ENCODE measurements at regions of chr5 and their contacts with region 1.

Region 1: GRCh38 chr5:95822542-95823181 is at the start of gene GLRX:
- DNase-seq: peak; percentile 91
- ATAC-seq: peak; percentile 70
- H3K4me3 ChIP-seq: peak within 1 kb of the TSS; percentile 73
- H3K27ac ChIP-seq: peak within 1 kb of the TSS; percentile 96
- H3K4me1 ChIP-seq: peaks cover 34% of the 10 kb centered on the region
- H3K27me3 ChIP-seq: no peaks in the 10 kb centered on the region
- CTCF ChIP-seq: no peak
- total RNA-seq, gene GLRX: 24.6 and 27.4 TPM in 2 replicates

Region 2: DNA sequence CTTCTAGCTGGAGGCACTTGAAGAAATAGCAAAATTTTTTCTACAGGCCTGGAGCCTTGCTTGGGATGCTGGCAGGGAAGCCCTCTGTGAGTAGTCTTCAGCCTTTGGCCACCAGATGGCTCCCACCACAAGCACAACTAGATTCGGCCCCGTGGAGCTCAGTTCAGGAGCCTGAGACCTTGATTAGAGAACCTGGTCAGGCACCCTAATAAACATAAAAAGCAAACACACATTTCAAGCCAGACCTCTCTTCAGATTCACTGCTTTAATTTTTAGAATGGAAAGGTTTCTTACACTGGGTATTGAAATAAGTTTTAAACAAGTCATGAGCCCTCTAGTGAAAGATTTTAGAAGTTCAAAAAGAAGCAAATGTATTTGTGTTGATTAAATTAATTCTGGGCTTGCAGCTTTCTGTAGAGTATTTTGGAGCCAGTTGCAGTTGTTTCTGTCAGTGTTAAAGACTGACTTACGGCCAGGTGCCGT is 41.5 kb before region 1 on chr5:
- CTCF ChIA-PET with region 1: interaction called, 15 read pairs
- POLR2A ChIA-PET with region 1: no interaction called
- intact Hi-C with region 1: no loop called
- DNase-seq: peak; percentile 73
- ATAC-seq: peak; percentile 100
- H3K4me3 ChIP-seq: no peak overlapping the region
- H3K27ac ChIP-seq: no peak overlapping the region
- H3K4me1 ChIP-seq: no peaks in the 10 kb centered on the region
- H3K27me3 ChIP-seq: no peaks in the 10 kb centered on the region
- CTCF ChIP-seq: peak; percentile 95

Region 3: GRCh38 chr5:95835682-95836385 is 13.2 kb after region 1 on chr5:
- CTCF ChIA-PET with region 1: no interaction called
- POLR2A ChIA-PET with region 1: interaction called, 20 read pairs
- intact Hi-C with region 1: loop called (anchors 1 kb)
- DNase-seq: no peak
- ATAC-seq: no peak
- H3K4me3 ChIP-seq: peak overlapping the region; percentile 71
- H3K27ac ChIP-seq: no peak overlapping the region
- H3K4me1 ChIP-seq: peaks cover 14% of the 10 kb centered on the region
- H3K27me3 ChIP-seq: no peaks in the 10 kb centered on the region
- CTCF ChIP-seq: no peak

Region 4: DNA sequence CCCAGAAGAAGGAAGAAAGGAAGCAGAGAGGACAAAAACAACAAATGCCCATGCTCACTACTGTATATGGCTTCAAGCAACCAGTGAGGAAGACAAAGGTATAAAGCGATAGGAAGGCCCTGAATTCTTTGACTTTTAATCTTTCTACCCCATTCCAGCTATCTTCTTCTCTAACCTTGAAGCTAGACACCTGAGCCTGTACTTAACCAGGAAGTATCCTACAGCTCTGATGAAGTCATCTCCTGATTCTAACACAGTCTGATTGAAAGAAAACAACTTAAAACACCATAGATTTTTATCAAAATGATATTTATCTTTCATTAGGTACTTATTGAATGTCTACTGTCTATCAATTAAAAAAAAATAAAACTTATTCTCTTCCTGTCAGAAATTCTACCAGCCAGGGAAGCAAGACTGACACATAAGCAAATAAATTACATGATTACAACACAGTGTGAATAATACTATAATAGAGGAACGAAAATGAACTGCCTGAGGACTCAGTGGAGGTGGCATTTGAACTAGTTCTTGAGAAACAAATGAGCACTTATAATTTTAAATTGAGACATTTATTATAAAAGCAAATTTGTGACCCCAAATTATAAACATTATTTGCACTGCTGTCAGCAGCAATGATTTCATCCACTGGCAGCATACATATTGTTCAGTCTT is 262.3 kb after region 1 on chr5:
- CTCF ChIA-PET with region 1: no interaction called
- POLR2A ChIA-PET with region 1: no interaction called
- intact Hi-C with region 1: no loop called
- DNase-seq: peak; percentile 25
- ATAC-seq: peak; percentile 56
- H3K4me3 ChIP-seq: no peak overlapping the region
- H3K27ac ChIP-seq: no peak overlapping the region
- H3K4me1 ChIP-seq: peaks cover 25% of the 10 kb centered on the region
- H3K27me3 ChIP-seq: no peaks in the 10 kb centered on the region
- CTCF ChIP-seq: no peak

Measured in PC-3 (cell line).